ENCODE measurements at regions of chr7 and their contacts with region 1.

Region 1: GRCh38 chr7:106111655-106112116 is 426 bp downstream of the SYPL1 start:
- DNase-seq: peak; percentile 94
- H3K4me3 ChIP-seq: peak overlapping the region; percentile 60 to 72 (median 66)
- H3K27ac ChIP-seq: peak overlapping the region; percentile 94 to 99 (median 98)
- H3K4me1 ChIP-seq: peaks cover 25 to 91% (median 77%) of the 10 kb centered on the region in 6 donors
- H3K27me3 ChIP-seq: no peaks in the 10 kb centered on the region
- CTCF ChIP-seq: no peak
- POLR2A ChIP-seq: no peak

Region 2: GRCh38 chr7:105448181-105448580 is 663.5 kb before region 1 on chr7:
- intact Hi-C with region 1: no loop called
- DNase-seq: no peak
- H3K4me3 ChIP-seq: peak overlapping the region in 1 of 8 donors; percentile 38
- H3K27ac ChIP-seq: peak overlapping the region; percentile 37 to 90 (median 74)
- H3K4me1 ChIP-seq: peaks cover 0 to 69% (median 12%) of the 10 kb centered on the region in 6 donors
- H3K27me3 ChIP-seq: no peaks in the 10 kb centered on the region
- CTCF ChIP-seq: no peak
- POLR2A ChIP-seq: no peak

Region 3: DNA sequence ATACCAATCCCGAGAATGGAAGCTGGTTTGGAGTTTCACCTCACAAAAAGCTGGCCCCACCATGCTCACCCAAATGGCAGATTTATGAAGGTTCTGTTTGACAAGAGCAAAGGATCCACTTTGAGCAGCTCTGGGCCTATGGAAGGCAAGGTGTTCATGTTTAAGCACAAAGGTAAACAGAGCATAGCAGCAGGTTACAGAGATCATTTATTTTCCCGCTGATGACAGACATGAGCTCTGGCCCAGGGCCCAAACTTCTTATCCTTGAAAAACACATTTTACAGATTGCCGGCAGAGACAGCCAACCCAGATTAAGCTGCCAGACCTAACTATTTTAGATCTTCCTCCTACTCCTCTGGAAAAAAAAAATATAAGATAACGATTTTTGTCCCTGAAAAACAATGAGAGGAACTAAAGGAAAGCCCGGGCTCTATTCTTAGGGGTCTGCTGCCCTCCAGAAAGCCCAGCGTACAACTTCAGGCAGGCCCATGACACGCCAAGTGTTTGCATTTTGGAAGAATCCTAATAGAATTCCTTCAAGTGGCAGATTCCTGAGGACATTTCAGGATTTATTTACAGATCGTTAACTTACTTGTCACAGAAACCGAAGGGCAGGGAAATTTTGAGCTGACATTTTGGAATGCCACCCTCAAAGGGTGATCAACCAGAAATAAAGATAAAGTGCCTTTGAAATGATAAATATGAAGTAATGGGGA is 39.5 kb before region 1 on chr7:
- intact Hi-C with region 1: loop called (anchors 2 kb)
- DNase-seq: no peak
- H3K4me3 ChIP-seq: no peak overlapping the region
- H3K27ac ChIP-seq: peak overlapping the region; percentile 88 to 96 (median 90)
- H3K4me1 ChIP-seq: peaks cover 56 to 100% (median 89%) of the 10 kb centered on the region in 6 donors
- H3K27me3 ChIP-seq: no peaks in the 10 kb centered on the region
- CTCF ChIP-seq: no peak
- POLR2A ChIP-seq: no peak

Measured in spleen (tissue), 13 donors.